Ascending aorta (tissue), 2 donors: ENCODE measurements at regions of chr17 and their contacts with region 1.

Region 1: DNA sequence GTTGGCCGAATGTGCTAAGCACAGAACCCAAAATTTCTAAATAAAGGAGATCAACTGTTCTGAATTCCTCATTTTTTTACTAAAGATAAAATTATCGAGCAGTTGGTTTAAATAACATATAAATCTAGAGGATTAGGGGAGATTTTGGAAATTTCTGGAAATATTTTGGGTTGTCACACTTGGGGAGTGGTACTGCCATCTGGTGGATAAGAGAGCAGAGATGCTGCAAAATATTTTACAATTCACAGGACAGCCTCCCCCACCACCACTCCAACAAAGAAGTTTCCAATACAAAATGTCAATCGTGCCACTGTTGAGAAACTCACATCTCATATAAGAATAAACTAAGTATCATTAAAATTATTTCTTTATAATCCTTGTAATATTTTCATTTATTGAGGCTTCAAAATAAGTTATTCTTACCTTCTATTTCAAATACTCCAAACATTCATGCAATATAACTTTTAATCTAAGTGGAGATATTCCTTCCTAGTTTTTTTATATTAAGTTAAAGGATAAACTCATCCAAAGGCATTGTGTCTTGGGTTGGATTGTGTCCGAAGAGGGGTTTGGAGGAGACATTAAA is 17.0 kb upstream of the ABCA8 start:
- DNase-seq: no peak
- H3K4me3 ChIP-seq: no peak overlapping the region
- H3K27ac ChIP-seq: no peak overlapping the region
- H3K4me1 ChIP-seq: no peaks in the 10 kb centered on the region
- H3K27me3 ChIP-seq: no peaks in the 10 kb centered on the region
- CTCF ChIP-seq: peak; percentile 10 to 53 (median 40)

Region 2: DNA sequence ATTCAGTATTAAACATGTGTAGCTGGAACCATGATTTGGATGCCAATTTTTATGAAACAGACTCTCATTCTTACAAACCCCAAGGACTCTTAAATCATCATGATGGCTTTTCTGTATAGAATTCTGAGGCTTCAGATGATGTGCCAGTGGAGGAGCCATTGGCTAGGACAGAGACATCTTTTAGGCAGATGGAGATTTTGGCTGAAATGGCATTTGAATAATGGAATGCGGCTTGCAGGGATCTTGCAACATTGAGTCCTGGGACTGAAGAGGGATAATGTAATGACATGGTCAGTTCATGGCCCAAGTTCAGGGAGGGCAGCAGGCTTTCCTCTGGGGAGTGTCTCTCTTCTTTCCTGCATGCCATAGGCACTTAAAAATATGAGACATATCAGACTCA is 189.4 kb before region 1 on chr17:
- intact Hi-C with region 1: loop called (anchors 2 kb)
- DNase-seq: no peak
- H3K4me3 ChIP-seq: no peak overlapping the region
- H3K27ac ChIP-seq: no peak overlapping the region
- H3K4me1 ChIP-seq: no peaks in the 10 kb centered on the region
- H3K27me3 ChIP-seq: no peaks in the 10 kb centered on the region
- CTCF ChIP-seq: no peak

Region 3: GRCh38 chr17:69235338-69235930 is 263.2 kb after region 1 on chr17:
- intact Hi-C with region 1: loop called (anchors 10 kb)
- DNase-seq: peak; percentile 22 to 86
- H3K4me3 ChIP-seq: no peak overlapping the region
- H3K27ac ChIP-seq: no peak overlapping the region
- H3K4me1 ChIP-seq: no peaks in the 10 kb centered on the region
- H3K27me3 ChIP-seq: no peaks in the 10 kb centered on the region
- CTCF ChIP-seq: peak; percentile 48 to 61 (median 60)